ENCODE measurements at regions of chr1 and their contacts with region 1.

Region 1: GRCh38 chr1:11037740-11038182 is 9.3 kb downstream of the MASP2 start:
- DNase-seq: peak; percentile 83
- H3K4me3 ChIP-seq: peak overlapping the region in 1 of 2 experiments; percentile 16; a peak in 1 of 4 replicates
- H3K27ac ChIP-seq: no peak overlapping the region
- H3K4me1 ChIP-seq: no peaks in the 10 kb centered on the region
- H3K27me3 ChIP-seq: no peaks in the 10 kb centered on the region
- CTCF ChIP-seq: peak; percentile 98
- EP300 ChIP-seq: no peak
- RAD21 ChIP-seq: peak; percentile 100

Region 2: DNA sequence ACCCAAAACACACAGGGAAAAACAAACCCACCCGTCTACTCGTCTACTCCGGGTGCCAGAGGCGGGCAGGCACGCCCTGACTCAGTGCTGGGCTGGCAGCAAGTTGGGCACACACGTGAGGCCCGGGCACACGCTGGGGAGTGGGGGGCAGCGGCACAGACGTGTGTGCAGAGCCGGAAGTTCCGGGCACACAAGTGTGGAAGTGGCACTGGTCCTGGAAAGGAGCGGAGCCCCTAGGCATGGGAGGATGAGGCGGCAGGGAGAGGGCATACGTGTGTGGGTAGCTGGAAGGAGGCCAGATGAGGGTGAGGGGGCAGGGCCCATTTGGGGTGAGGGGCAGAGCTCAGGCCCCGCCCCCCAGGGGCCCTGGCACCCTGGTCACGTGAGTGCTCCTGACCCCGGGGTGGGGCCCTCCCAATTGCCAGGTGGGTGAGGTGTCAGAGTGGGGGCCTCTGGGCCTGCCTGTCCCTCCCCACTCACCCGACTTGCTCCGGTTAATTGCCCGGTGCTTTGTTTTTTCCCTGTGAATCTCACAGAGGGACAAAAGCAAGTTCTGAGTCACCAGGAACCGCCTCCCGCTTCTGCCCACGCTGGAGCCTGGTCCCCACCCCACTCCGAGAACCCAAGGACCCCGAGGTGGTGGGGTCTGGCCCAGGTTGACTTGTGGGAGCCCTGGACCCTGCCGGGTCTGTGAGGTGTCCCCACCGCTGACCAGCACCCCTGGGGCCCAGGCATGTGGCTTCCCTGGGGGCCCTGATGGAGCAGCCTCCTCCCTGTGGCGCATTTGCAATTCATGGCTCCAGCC is 136.5 kb before region 1 on chr1:
- CTCF ChIA-PET with region 1: no interaction called
- POLR2A ChIA-PET with region 1: no interaction called
- DNase-seq: peak; percentile 70
- H3K4me3 ChIP-seq: no peak overlapping the region
- H3K27ac ChIP-seq: peak overlapping the region in 1 of 2 experiments; percentile 64; a peak in 2 of 4 replicates
- H3K4me1 ChIP-seq: peaks cover 0 to 61% of the 10 kb centered on the region in 2 experiments; a peak in 1 of 4 replicates
- H3K27me3 ChIP-seq: no peaks in the 10 kb centered on the region
- CTCF ChIP-seq: no peak
- EP300 ChIP-seq: no peak
- RAD21 ChIP-seq: no peak

Region 3: GRCh38 chr1:11027316-11027715 is 10.4 kb before region 1 on chr1:
- CTCF ChIA-PET with region 1: interaction called, 24 read pairs
- POLR2A ChIA-PET with region 1: interaction called, 4 read pairs
- DNase-seq: no peak
- H3K4me3 ChIP-seq: no peak overlapping the region
- H3K27ac ChIP-seq: no peak overlapping the region
- H3K4me1 ChIP-seq: no peaks in the 10 kb centered on the region
- H3K27me3 ChIP-seq: no peaks in the 10 kb centered on the region
- CTCF ChIP-seq: no peak
- EP300 ChIP-seq: no peak
- RAD21 ChIP-seq: no peak

Region 4: GRCh38 chr1:11072216-11072917 is 34.6 kb after region 1 on chr1:
- CTCF ChIA-PET with region 1: interaction called, 17 read pairs
- POLR2A ChIA-PET with region 1: no interaction called
- DNase-seq: no peak
- H3K4me3 ChIP-seq: no peak overlapping the region
- H3K27ac ChIP-seq: no peak overlapping the region
- H3K4me1 ChIP-seq: no peaks in the 10 kb centered on the region
- H3K27me3 ChIP-seq: no peaks in the 10 kb centered on the region
- CTCF ChIP-seq: no peak
- EP300 ChIP-seq: no peak
- RAD21 ChIP-seq: no peak

Region 5: DNA sequence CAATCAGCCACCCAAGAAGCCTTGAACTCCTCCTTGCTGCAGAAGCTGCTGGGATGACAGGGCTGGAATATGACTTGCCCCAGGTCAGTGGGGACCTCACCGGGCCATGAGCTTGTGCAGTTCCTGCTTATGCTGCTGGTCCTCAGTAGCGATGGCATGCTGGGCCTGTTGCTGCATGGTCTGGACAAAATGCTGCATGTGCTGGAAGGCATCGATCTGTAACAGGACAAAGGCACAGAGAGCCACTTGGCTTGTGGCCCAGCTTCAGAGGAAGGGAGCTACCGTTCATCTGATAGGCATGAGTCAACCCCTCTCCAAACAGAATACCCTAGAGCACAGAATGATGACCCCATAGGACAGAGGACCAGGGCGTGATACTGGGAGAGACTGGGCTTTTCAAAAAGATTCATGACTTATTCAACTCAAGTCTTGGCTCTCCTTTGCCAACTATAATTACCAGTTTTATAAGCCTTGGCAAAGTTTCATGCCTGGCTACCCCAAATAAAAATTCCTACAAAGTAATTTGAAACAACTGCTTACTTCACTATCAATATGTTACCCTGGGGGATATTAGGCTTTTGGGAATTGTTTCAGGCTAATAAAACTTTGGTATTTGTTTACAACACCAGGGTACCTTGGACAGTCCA is 96.6 kb after region 1 on chr1:
- CTCF ChIA-PET with region 1: interaction called, 19 read pairs
- POLR2A ChIA-PET with region 1: no interaction called
- DNase-seq: peak; percentile 78
- H3K4me3 ChIP-seq: no peak overlapping the region
- H3K27ac ChIP-seq: peak overlapping the region; percentile 4 to 88; a peak in 2 of 4 replicates
- H3K4me1 ChIP-seq: peaks cover 18 to 36% of the 10 kb centered on the region in 2 experiments
- H3K27me3 ChIP-seq: no peaks in the 10 kb centered on the region
- CTCF ChIP-seq: no peak
- EP300 ChIP-seq: peak in 1 of 2 experiments; percentile 72; a peak in 3 of 4 replicates
- RAD21 ChIP-seq: no peak; the same call in 1 of the 2 replicates

Region 6: GRCh38 chr1:11211925-11212587 is 174.3 kb after region 1 on chr1:
- CTCF ChIA-PET with region 1: interaction called, 14 read pairs
- POLR2A ChIA-PET with region 1: no interaction called
- DNase-seq: no peak
- H3K4me3 ChIP-seq: no peak overlapping the region
- H3K27ac ChIP-seq: no peak overlapping the region
- H3K4me1 ChIP-seq: no peaks in the 10 kb centered on the region
- H3K27me3 ChIP-seq: no peaks in the 10 kb centered on the region
- CTCF ChIP-seq: no peak
- EP300 ChIP-seq: no peak
- RAD21 ChIP-seq: no peak

Region 7: DNA sequence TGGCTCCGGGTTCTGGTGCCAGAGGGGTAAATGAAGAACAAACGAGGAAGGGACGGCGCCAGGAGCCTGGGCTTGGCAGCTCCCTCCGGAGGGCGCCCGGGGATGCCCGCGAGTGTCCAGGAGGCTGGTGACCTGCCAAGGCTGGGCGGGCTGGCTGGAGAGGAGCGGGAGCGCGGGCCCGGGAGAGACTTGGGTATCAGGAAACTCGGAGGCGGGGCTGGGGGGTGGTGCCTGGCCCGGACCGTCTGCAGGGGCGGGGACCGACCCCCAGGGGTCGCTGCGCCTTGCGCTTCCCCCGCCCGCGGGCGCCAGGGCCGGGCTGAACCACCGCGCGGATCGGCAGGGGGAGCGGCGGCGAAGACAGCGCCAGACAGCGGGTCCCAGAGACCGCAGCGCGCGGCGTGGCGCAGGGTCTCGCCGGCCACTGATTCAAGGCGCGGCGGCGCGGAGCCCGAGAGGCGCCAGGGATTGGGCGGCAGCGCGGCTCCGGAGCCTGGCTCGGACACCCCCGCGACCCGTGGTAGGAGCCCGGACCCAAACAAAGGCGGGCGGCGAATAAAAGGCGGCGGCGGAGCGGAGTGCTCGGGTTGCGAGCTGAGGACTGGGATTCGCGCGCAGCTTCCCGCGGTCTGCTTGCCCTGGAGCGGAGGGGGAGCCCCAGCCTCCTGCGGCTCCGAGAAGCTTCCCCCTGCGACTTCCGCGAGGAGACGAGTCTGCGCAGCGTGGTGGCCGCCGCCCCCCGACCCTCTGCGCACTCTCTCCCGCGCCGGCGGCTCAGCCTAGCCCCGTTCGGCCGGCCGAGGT is 441.0 kb after region 1 on chr1 and contains the start of gene DISP3:
- CTCF ChIA-PET with region 1: interaction called, 11 read pairs
- POLR2A ChIA-PET with region 1: no interaction called
- DNase-seq: peak; percentile 99
- H3K4me3 ChIP-seq: peak within 1 kb of the TSS; percentile 66 to 75
- H3K27ac ChIP-seq: peak within 1 kb of the TSS in 1 of 2 experiments; percentile 89; a peak in 2 of 4 replicates
- H3K4me1 ChIP-seq: peaks cover 0 to 50% of the 10 kb centered on the region in 2 experiments; a peak in 2 of 4 replicates
- H3K27me3 ChIP-seq: no peaks in the 10 kb centered on the region
- CTCF ChIP-seq: peak; percentile 62
- EP300 ChIP-seq: peak in 1 of 2 experiments; percentile 55; a peak in 1 of 4 replicates
- RAD21 ChIP-seq: peak; percentile 50
- polyA plus RNA-seq, gene DISP3: 0.08 and 0.15 TPM in 2 replicates

Measured in SK-N-SH (cell line).